Astrocyte of the cerebellum (primary cell): ENCODE measurements at regions of chr9 and their contacts with region 1.

Region 1: GRCh38 chr9:89410641-89411350 is 87.1 kb downstream of the SEMA4D start:
- DNase-seq: no peak
- H3K4me3 ChIP-seq: no peak overlapping the region
- CTCF ChIP-seq: no peak

Region 2: GRCh38 chr9:89052470-89053097 is 358.2 kb before region 1 on chr9:
- in situ Hi-C with region 1: no loop called
- DNase-seq: no peak
- H3K4me3 ChIP-seq: no peak overlapping the region
- CTCF ChIP-seq: no peak

Region 3: DNA sequence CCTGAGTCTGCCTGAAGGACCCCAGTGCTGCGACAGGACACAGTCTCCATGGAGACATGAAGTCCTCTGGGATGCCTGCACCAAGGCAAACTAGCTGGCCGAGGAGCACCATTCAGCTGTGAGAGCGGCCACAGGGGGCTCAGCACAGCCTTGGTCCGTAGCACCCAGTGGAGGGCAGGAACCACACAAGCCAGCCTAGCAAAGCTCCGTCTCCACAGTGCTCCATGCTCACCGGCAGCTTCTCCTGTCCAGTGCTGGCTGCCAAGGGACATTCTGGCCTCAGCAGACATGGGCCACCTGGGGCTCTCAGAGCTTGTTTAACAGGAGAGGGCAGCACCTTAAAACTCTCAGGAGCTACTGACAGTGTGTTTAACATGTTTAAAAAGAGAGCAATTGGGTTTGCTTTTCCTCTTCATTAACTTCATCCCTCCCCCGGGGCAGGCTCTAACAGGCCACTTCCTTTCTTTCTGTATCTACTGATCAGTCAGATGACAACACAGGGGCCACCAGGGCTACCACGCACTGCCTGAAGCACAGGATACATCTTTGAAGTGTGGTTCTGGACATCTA is 35.5 kb before region 1 on chr9:
- in situ Hi-C with region 1: no loop called
- DNase-seq: no peak
- H3K4me3 ChIP-seq: no peak overlapping the region
- CTCF ChIP-seq: no peak

Region 4: GRCh38 chr9:89448381-89448780 is 37.6 kb after region 1 on chr9:
- in situ Hi-C with region 1: loop called (anchors 5 kb)
- DNase-seq: no peak
- H3K4me3 ChIP-seq: no peak overlapping the region
- CTCF ChIP-seq: no peak